Activated B cell treated with CpG ODN at 0.5 μM for 24 hours (primary cell): ENCODE measurements at regions of chr5 and their contacts with region 1.

Region 1: DNA sequence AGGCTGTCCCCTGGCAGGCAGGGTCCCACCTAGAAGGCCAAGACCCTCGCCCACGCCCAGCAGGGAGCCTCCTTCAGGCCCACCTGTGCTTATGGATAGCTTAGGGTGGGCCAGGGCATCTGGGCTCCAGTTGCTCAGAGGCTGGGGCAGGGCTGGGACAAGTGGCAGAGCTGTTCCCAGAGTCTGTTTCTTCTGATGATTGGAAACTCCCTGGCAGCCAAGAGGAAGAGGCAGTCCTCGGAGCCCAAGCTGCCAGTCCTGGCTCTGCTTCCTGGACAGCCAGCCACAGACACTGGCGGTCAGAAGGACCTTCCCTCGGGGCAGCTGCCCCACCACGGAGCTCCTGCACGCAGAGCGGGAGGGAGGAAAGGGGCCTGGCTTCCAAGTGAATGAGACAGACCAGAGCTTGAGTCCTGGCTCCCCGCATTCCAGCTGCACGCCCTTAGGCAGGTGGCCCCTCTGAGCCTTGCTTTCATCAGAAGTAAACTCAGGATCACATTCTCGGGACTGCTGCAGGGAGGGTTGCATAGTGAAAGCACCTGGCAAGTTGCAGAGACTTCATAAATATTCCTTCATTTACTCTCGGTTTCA is 37.9 kb upstream of the GABRP start:
- DNase-seq: no peak
- ATAC-seq: no peak
- H3K4me3 Mint-ChIP-seq: no peak overlapping the region
- H3K27ac Mint-ChIP-seq: no peak overlapping the region
- H3K4me1 Mint-ChIP-seq: peaks cover 3% of the 10 kb centered on the region
- H3K27me3 Mint-ChIP-seq: peaks cover 32% of the 10 kb centered on the region
- CTCF ChIP-seq: no peak

Region 2: DNA sequence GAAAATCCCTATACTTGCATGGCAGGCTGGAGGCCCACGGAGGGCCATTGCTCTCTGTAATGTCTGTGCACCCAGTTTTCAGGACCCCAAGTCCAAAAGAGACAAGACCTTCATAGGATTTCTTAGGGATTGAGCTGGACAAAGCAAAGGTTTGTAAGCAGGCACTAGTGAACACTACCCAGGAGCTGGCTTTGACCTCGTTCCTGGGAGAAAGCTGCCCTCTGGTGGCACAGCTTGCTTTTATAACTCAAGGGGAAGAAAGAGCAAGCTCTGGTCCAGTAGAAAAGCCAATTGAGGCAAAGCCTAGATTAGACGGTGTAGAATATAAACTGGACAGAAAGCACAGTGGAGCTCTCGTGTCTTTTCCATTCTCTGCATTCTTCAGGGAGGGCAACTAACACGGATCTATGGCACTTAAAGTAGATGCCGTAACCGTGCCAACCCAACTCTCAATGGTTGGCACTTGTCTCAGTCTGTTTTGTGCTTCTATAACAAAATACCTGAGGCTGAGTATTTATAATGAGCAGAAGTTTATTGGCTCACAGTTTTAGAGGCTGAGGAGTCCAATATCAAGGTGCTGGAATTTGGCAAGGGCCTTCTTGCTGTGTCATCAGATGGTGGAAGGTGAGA is 45.9 kb after region 1 on chr5:
- CTCF ChIA-PET with region 1: interaction called, 19 read pairs
- POLR2A ChIA-PET with region 1: no interaction called
- intact Hi-C with region 1: loop called (anchors 1 kb)
- DNase-seq: no peak
- ATAC-seq: no peak
- H3K4me3 Mint-ChIP-seq: no peak overlapping the region
- H3K27ac Mint-ChIP-seq: no peak overlapping the region
- H3K4me1 Mint-ChIP-seq: no peaks in the 10 kb centered on the region
- H3K27me3 Mint-ChIP-seq: peaks cover 2% of the 10 kb centered on the region
- CTCF ChIP-seq: no peak

Region 3: DNA sequence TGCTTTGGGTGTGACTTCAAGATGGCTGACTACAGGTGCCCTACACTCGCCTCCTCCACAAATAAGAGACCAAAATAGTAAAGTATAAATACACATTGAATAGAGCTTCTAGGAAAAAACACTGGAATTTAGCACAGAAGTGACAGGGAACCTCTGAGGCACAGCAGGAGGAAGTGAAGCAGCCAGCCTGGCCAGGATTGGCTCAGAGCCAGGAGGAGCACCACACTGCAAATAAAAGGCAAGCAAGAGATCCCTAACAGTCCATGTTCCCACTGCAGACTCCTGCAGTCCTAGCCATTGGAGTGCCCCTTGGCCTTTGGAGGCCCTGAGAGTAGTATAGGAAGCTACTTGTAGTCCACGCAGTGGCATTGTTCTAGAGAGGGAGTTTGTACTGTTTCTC is 376.8 kb after region 1 on chr5:
- CTCF ChIA-PET with region 1: no interaction called
- POLR2A ChIA-PET with region 1: no interaction called
- intact Hi-C with region 1: no loop called
- DNase-seq: no peak
- ATAC-seq: no peak
- H3K4me3 Mint-ChIP-seq: no peak overlapping the region
- H3K27ac Mint-ChIP-seq: no peak overlapping the region
- H3K4me1 Mint-ChIP-seq: no peaks in the 10 kb centered on the region
- H3K27me3 Mint-ChIP-seq: peaks cover 1% of the 10 kb centered on the region
- CTCF ChIP-seq: no peak

Region 4: DNA sequence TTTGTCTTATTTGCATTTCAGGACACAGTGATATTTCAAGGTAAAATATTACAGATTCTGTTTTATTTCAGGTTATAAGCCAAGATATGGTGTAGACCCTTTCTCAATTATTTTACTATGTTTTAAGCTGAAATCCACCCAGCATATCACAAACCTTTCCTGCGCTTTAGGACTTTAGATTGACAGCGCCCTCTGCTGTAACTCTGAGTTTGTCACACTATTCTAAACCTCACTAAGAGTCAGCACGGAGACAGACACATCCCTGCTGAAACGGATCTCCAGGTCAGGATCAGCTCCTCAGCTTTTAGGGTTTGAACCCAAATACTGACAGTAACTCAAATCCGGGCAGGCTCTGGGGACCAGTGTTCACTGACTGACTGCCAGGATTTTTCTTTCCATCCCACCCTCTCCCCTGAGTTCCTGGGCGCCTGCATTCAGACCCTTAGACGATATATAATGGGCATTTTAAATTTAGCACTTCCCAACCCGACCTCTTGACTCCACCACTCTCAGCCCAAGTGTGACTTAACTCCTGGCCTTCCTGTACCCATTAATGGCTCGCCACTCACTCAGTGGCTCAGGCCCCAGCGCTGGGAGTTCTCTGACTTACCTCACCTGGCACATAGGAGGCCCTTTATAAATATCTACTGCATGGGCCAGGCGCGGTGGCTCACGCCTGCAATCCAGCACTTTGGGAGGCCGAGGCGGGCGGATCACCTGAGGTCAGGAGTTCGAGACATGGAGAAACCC is 597.0 kb after region 1 on chr5:
- CTCF ChIA-PET with region 1: no interaction called
- POLR2A ChIA-PET with region 1: no interaction called
- intact Hi-C with region 1: loop called (anchors 1 kb)
- DNase-seq: no peak
- ATAC-seq: no peak
- H3K4me3 Mint-ChIP-seq: no peak overlapping the region
- H3K27ac Mint-ChIP-seq: no peak overlapping the region
- H3K4me1 Mint-ChIP-seq: no peaks in the 10 kb centered on the region
- H3K27me3 Mint-ChIP-seq: peaks cover 13% of the 10 kb centered on the region
- CTCF ChIP-seq: no peak

Region 5: GRCh38 chr5:172078726-172079345 is 1333.3 kb after region 1 on chr5:
- CTCF ChIA-PET with region 1: no interaction called
- POLR2A ChIA-PET with region 1: no interaction called
- intact Hi-C with region 1: no loop called
- DNase-seq: no peak
- ATAC-seq: no peak
- H3K4me3 Mint-ChIP-seq: no peak overlapping the region
- H3K27ac Mint-ChIP-seq: no peak overlapping the region
- H3K4me1 Mint-ChIP-seq: no peaks in the 10 kb centered on the region
- H3K27me3 Mint-ChIP-seq: no peaks in the 10 kb centered on the region
- CTCF ChIP-seq: no peak